Common myeloid progenitor, CD34-positive (primary cell): ENCODE measurements at regions of chrX and their contacts with region 1.

Region 1: DNA sequence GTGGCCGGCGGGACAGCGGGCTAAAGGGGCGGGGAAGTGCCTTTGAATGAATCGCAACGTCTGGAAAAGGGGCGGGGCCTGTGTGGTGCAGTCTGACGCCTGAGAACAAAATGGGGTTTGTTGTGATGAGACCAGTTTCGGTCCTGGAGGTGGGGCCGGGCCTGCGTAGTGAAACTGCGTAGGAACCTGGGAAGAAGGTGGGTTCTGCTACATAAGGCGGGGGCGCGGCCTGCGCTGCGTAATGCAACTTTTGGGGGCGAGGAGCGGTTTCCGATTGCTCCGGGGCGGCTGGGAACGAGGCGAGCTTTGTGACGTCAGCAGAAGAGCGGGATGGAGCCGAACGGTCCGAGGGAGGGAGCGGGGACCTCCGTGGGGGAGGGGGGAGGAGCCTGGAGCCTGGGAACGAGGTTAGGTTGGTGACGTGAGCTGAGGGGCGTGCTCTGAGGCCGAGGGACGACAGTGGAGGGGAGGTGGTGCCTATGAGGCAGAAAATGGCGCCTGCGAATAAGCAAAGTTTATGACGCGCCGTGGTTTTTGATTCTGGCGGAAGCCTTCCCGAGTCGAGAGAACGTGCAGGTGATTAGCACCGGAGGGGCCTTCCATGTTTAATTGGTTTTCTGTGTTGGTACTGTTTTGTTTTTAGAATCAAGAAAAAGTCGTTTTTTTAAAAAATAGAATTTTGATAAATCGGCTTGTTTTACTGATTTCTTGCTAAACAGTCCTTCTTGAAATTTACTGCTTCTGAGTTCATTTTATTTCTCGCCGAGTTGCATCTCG is 716 bp downstream of the USP11 start:
- DNase-seq: peak; percentile 96 to 99 (median 98)
- H3K4me3 ChIP-seq: peak overlapping the region; percentile 64 to 89 (median 74)
- H3K27ac ChIP-seq: peak overlapping the region; percentile 85 to 93
- H3K4me1 ChIP-seq: peaks cover 3 to 13% (median 4%) of the 10 kb centered on the region in 4 experiments
- H3K27me3 ChIP-seq: peaks cover 0 to 41% (median 0%) of the 10 kb centered on the region in 5 experiments

Region 2: GRCh38 chrX:47217642-47218279 is 15.8 kb before region 1 on chrX:
- CTCF ChIA-PET with region 1: no interaction called
- POLR2A ChIA-PET with region 1: interaction called, 10 read pairs
- DNase-seq: peak; percentile 97 to 100 (median 100)
- H3K4me3 ChIP-seq: peak overlapping the region; percentile 67 to 93 (median 86)
- H3K27ac ChIP-seq: peak overlapping the region; percentile 92 to 98
- H3K4me1 ChIP-seq: peaks cover 4 to 38% (median 31%) of the 10 kb centered on the region in 4 experiments
- H3K27me3 ChIP-seq: no peaks in the 10 kb centered on the region

Region 3: GRCh38 chrX:47311932-47312774 is 78.6 kb after region 1 on chrX:
- CTCF ChIA-PET with region 1: no interaction called
- POLR2A ChIA-PET with region 1: no interaction called
- DNase-seq: peak; percentile 65 to 86 (median 83)
- H3K4me3 ChIP-seq: peak overlapping the region in 1 of 7 experiments; percentile 23
- H3K27ac ChIP-seq: no peak overlapping the region
- H3K4me1 ChIP-seq: no peaks in the 10 kb centered on the region
- H3K27me3 ChIP-seq: peaks cover 0 to 20% (median 0%) of the 10 kb centered on the region in 5 experiments